ENCODE measurements at regions of chr1 and their contacts with region 1.

Region 1: GRCh38 chr1:175154629-175155472 is 37.7 kb downstream of the KIAA0040 start:
- DNase-seq: peak; percentile 69 to 76
- ATAC-seq: peak; percentile 31 to 66 (median 60)
- H3K4me3 ChIP-seq: no peak overlapping the region
- H3K27ac ChIP-seq: no peak overlapping the region
- H3K4me1 ChIP-seq: peaks cover 0 to 25% (median 11%) of the 10 kb centered on the region in 9 donors
- H3K27me3 ChIP-seq: peaks cover 0 to 20% (median 0%) of the 10 kb centered on the region in 7 donors
- CTCF ChIP-seq: peak; percentile 79 to 94 (median 91)

Region 2: DNA sequence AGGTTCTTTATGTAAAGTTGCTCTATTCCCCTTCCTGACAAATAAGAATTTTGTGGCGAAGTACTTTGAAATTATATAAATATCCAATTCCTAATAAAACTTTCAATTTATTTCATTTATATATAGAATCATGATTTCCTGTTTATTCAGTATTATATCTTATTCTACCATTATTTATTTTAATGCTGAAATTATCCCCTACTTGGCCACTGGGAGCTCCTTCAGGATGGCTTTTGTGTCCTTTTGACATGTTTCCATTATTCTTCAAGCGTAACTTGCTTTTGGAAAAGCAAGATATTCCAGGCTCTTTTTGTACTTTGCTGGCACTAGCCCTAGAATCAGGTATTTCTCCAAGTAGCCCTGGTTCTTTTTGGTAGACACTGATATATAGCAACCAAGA is 222.3 kb before region 1 on chr1:
- intact Hi-C with region 1: no loop called
- DNase-seq: no peak
- ATAC-seq: no peak
- H3K4me3 ChIP-seq: no peak overlapping the region
- H3K27ac ChIP-seq: no peak overlapping the region
- H3K4me1 ChIP-seq: peaks cover 0 to 4% (median 0%) of the 10 kb centered on the region in 9 donors
- H3K27me3 ChIP-seq: no peaks in the 10 kb centered on the region
- CTCF ChIP-seq: no peak

Region 3: DNA sequence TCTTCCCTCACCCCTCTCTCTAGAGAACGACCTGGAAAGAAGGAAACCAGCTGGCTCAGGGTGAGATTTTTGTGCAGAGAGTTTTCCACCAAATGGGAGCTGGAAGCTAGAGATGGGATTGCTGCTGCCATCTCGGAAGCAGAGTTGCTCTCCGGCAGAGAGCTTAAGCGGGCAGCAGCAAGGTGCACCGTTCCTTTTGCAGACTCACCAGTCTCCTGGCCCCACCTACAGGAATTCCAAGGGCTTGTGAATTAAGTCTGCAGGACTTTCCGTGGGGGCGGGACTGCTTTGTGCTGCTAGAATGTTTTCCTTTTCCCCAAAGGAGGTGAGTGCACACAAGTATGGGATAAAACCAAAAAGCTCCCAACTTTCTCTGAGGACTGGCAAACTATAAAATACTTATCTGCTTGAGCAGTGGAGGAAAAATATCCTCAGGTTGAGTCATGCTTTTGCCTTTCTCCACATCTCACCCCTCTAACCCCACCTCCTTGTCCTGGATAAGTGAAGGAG is 66.9 kb after region 1 on chr1:
- intact Hi-C with region 1: loop called in 7 of 10 experiments (anchors 1 to 5 kb)
- DNase-seq: peak in 1 of 2 donors; percentile 43
- ATAC-seq: peak; percentile 48 to 82 (median 66)
- H3K4me3 ChIP-seq: no peak overlapping the region
- H3K27ac ChIP-seq: peak overlapping the region in 7 of 10 donors; percentile 8 to 71 (median 48)
- H3K4me1 ChIP-seq: peaks cover 17 to 48% (median 39%) of the 10 kb centered on the region in 9 donors
- H3K27me3 ChIP-seq: no peaks in the 10 kb centered on the region
- CTCF ChIP-seq: peak in 7 of 9 donors; percentile 29 to 58 (median 41)

Region 4: DNA sequence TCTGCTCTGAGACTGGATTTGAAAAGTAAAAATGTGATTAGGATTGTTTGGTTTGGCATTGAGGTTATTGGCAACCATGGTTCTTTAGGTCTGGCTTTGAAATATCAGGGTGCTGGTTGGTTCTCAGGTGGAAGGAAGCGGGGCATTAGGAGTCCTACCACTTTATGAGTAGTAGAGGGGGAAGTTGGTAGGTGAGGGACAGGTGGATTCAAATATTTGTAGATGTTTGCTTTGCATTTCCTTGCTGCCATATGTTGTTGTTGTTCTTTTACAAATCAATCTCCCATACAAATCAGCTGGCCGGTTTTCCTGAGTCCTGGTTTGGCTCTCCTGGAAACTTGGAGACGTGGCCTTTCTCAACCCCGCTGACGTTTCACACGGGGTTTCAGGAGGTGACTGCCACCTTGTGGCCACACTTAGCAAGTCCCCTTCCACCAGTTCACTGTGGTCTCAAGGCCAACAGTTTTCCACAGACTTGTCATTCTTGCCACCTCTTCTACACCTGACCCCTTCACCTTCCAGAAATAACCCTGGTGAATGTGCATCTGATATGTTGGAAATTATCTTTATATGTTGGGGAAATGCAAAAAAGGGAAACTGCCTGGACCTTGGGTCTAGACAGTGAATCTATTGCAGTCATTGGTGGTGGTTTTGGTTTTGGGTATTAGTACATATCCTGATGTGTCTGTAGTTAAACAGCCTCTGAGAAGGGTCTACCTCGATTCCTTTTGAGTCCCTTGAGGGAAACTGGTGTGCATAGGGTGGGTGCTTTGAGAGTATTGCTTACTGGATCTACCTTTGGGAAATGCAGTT is 164.8 kb after region 1 on chr1:
- intact Hi-C with region 1: loop called (anchors 1 to 2 kb)
- DNase-seq: peak; percentile 74 to 85
- ATAC-seq: peak; percentile 83 to 92 (median 88)
- H3K4me3 ChIP-seq: no peak overlapping the region
- H3K27ac ChIP-seq: peak overlapping the region in 7 of 10 donors; percentile 28 to 84 (median 80)
- H3K4me1 ChIP-seq: peaks cover 3 to 31% (median 20%) of the 10 kb centered on the region in 9 donors
- H3K27me3 ChIP-seq: no peaks in the 10 kb centered on the region
- CTCF ChIP-seq: peak; percentile 80 to 94 (median 91)

Region 5: GRCh38 chr1:176073524-176074157 is 918.8 kb after region 1 on chr1:
- intact Hi-C with region 1: loop called in 6 of 10 experiments (anchors 2 to 10 kb)
- DNase-seq: peak in 1 of 2 donors; percentile 67
- ATAC-seq: peak in 7 of 8 donors; percentile 38 to 72 (median 68)
- H3K4me3 ChIP-seq: no peak overlapping the region
- H3K27ac ChIP-seq: no peak overlapping the region
- H3K4me1 ChIP-seq: peaks cover 0 to 6% (median 0%) of the 10 kb centered on the region in 9 donors
- H3K27me3 ChIP-seq: no peaks in the 10 kb centered on the region
- CTCF ChIP-seq: peak; percentile 45 to 86 (median 78)

Region 6: GRCh38 chr1:176341656-176342055 is 1186.8 kb after region 1 on chr1:
- intact Hi-C with region 1: no loop called
- DNase-seq: no peak
- ATAC-seq: no peak
- H3K4me3 ChIP-seq: no peak overlapping the region
- H3K27ac ChIP-seq: no peak overlapping the region
- H3K4me1 ChIP-seq: no peaks in the 10 kb centered on the region
- H3K27me3 ChIP-seq: no peaks in the 10 kb centered on the region
- CTCF ChIP-seq: no peak

Measured in heart right ventricle (tissue), 16 donors.